Adrenal gland (tissue), 19 donors: ENCODE measurements at regions of chr18 and their contacts with region 1.

Region 1: DNA sequence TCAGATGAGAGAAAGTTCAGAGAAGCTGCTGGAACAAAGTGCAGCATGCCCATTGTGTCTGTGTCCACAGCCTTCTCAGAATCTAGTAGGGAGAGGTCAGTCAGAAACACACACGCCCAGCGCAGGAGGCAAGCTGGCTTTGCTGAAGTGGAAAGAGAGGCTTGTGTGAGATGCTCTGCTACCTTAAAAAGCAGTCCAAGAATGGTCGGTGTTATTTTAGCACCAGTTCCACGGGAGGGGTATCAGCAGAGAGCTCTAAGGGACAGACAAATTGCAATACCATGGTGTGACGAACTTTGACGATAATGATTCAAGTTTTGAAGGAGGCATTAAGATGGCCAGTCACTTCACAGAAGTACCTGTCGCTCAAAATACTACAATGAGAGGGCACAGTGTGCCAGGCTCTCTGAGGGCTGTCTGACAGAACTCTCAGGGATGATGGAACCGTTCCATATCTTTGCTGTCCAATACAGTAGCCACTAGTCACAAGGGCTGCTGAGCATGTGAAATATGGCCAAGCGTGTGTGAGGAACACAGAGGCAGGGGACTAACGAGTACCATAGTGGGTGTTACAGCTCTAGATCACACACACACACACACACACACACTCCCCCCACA is 237.5 kb upstream of the TMEM200C start:
- DNase-seq: no peak
- H3K4me3 ChIP-seq: no peak overlapping the region
- H3K27ac ChIP-seq: no peak overlapping the region
- H3K4me1 ChIP-seq: no peaks in the 10 kb centered on the region
- H3K27me3 ChIP-seq: no peaks in the 10 kb centered on the region
- CTCF ChIP-seq: no peak
- POLR2A ChIP-seq: no peak

Region 2: DNA sequence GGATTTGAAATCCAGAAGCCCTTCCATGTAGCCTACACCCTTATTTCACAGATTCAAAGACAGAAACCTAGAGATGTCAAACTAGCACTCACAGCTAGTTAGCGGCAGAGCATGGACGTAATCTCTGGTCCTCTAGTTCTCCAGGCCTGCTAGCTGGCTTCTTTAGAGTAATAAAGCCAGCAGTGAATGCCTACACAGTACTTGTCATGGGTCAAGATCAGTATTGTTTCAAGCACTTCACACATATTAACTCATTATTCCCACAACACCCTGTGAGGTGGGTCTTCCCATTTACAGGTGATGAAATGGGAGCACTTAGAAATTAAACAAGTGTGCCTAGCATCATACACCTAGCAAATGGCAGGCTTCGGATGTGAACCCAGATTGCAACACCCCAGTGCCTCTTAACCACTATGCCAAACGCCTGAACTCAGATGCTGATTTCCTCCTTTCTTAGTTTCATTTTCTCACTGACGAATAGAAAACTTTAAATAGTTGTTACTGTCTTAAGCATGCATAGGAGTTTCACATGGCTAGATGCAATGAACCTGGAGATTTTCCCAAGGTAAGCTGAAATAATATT is 822.9 kb before region 1 on chr18:
- intact Hi-C with region 1: no loop called
- DNase-seq: no peak
- H3K4me3 ChIP-seq: no peak overlapping the region
- H3K27ac ChIP-seq: no peak overlapping the region
- H3K4me1 ChIP-seq: peaks cover 0 to 10% of the 10 kb centered on the region in 2 donors
- H3K27me3 ChIP-seq: no peaks in the 10 kb centered on the region
- CTCF ChIP-seq: no peak
- POLR2A ChIP-seq: no peak

Region 3: GRCh38 chr18:6044773-6045172 is 88.1 kb before region 1 on chr18:
- intact Hi-C with region 1: loop called in 1 of 2 experiments (anchors 10 kb)
- DNase-seq: no peak
- H3K4me3 ChIP-seq: no peak overlapping the region
- H3K27ac ChIP-seq: no peak overlapping the region
- H3K4me1 ChIP-seq: no peaks in the 10 kb centered on the region
- H3K27me3 ChIP-seq: no peaks in the 10 kb centered on the region
- CTCF ChIP-seq: no peak
- POLR2A ChIP-seq: no peak